Cardiac septum (tissue), 1 donor: ENCODE measurements at regions of chr3 and their contacts with region 1.

Region 1: DNA sequence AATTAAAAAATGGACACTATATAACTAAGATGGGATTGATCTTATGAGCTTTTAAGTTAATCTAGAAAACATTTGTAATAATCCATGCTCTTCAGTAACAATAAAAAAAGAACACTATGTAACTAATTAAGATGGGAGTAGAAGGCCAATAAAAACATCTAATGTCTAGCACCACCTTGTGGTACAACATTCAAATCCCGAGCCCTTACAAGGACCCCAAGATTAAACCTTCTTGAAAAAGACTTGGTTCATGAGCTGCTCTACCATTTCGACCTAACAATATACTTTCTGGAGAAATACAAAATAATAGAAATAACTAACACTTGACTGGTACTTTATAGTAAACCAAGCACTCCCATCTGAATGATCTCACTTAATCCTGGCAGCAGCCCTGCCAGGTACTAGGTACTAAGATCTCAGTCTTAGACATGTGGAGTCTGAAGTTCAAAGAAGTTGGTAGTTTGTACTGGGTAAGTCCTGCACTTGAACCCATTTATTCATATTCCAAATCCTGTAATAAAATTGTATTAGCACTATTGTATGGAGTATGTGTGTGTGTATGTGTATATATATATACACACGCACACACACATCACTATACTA is 21.8 kb downstream of the METTL6 start:
- DNase-seq: no peak

Region 2: GRCh38 chr3:15113463-15113862 is 292.1 kb before region 1 on chr3:
- intact Hi-C with region 1: loop called (anchors 10 kb)
- DNase-seq: no peak

Region 3: DNA sequence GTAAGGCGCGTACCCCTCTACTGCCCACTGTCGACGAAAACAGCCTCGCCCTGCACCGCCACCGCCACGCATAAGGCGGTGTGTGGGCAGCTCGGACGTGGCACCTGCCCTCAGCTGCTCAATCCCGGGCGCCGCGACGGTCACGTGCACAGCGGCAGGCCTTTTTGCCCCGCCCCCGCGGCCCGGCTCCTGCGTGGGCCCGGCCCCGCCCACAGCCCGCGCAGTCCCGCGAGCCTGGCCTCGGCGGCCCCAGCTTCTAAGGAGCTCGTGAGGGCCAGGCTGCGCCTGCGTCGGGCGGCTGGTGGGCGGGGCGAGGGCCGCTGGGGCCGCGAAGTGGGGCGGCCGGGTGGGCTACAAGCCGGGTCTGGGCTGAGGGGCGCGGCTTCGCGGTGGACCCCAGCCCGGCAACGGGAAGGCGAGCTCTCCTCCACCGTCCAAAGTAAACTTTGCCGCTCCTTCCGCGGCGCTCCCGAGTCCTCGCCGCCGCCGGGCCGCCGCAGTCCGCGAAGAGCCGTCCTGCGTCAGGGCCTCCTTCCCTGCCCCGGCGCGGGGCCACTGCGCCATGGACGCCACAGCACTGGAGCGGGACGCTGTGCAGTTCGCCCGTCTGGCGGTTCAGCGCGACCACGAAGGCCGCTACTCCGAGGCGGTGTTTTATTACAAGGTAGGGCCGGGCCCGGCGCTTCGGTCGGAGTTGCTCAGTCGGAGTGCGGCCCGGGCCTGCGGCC is 199.5 kb before region 1 on chr3 and contains the start of gene CAPN7:
- intact Hi-C with region 1: loop called (anchors 5 kb)
- DNase-seq: peak; percentile 98
- total RNA-seq, gene CAPN7: 29.2 TPM

Region 4: DNA sequence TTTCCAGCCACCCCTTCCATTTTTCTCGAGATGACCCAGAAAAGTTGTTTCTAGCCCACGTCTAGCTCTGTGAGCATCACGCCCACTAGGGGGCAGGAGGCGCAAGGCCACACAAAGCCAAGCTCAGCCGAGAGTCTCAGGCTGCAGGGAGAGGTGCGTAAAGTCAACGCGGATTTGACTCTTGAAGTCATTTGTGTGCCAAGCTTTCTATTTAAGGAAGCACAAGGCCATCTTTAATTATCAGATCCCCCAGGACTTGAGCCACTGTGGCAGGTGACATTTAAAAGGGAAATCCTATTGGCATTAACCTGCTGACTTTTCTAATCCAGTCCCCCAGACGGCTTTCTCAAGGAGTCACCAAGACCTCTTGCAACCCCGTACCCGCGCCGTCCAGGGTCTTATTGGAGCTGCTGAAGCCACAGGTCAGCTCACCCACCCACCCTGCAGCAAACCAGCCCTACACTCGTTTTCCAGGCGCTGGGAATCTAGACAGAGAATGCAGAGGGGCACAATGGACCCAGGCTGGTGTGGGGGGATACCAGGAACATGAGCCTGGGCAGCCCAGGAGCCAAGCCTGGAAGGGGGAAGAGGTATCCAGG is 137.4 kb before region 1 on chr3:
- intact Hi-C with region 1: loop called (anchors 2 kb)
- DNase-seq: peak; percentile 94